ENCODE measurements at regions of chr3 and their contacts with region 1.

Region 1: GRCh38 chr3:45236964-45237363 is 10.9 kb upstream of the TMEM158 start:
- H3K4me3 Mint-ChIP-seq: no peak overlapping the region
- H3K27ac Mint-ChIP-seq: no peak overlapping the region
- H3K4me1 Mint-ChIP-seq: no peaks in the 10 kb centered on the region
- H3K27me3 Mint-ChIP-seq: peaks cover 9% of the 10 kb centered on the region

Region 2: GRCh38 chr3:45092132-45093031 is 144.6 kb before region 1 on chr3:
- intact Hi-C with region 1: no loop called
- H3K4me3 Mint-ChIP-seq: no peak overlapping the region
- H3K27ac Mint-ChIP-seq: no peak overlapping the region
- H3K4me1 Mint-ChIP-seq: peaks cover 11% of the 10 kb centered on the region
- H3K27me3 Mint-ChIP-seq: no peaks in the 10 kb centered on the region

Region 3: GRCh38 chr3:45343947-45344346 is 107.0 kb after region 1 on chr3:
- intact Hi-C with region 1: loop called (anchors 10 kb)
- H3K4me3 Mint-ChIP-seq: no peak overlapping the region
- H3K27ac Mint-ChIP-seq: no peak overlapping the region
- H3K4me1 Mint-ChIP-seq: peaks cover 7% of the 10 kb centered on the region
- H3K27me3 Mint-ChIP-seq: peaks cover 1% of the 10 kb centered on the region

Measured in dendritic cell treated with granulocyte-macrophage colony-stimulating factor and Interleukin-4, amounts not matched to agents 40 ng/mL and 50 ng/mL, for 4 days (primary cell).